ENCODE measurements at regions of chr11 and their contacts with region 1.

Region 1: GRCh38 chr11:12864316-12865156 is 144.6 kb upstream of the RASSF10 start:
- DNase-seq: peak in 1 of 2 experiments; percentile 75
- H3K4me3 ChIP-seq: peak overlapping the region; percentile 9 to 50 (median 13); a peak in 5 of 8 replicates
- H3K27ac ChIP-seq: peak overlapping the region; percentile 95
- H3K4me1 ChIP-seq: peaks cover 6 to 29% (median 26%) of the 10 kb centered on the region in 4 experiments
- H3K27me3 ChIP-seq: no peaks in the 10 kb centered on the region
- CTCF ChIP-seq: no peak
- EP300 ChIP-seq: peak in 1 of 2 experiments; percentile 95; a peak in 1 of 3 replicates
- POLR2A ChIP-seq: peak; percentile 6 to 9; a peak in 2 of 3 replicates
- RAD21 ChIP-seq: no peak

Region 2: DNA sequence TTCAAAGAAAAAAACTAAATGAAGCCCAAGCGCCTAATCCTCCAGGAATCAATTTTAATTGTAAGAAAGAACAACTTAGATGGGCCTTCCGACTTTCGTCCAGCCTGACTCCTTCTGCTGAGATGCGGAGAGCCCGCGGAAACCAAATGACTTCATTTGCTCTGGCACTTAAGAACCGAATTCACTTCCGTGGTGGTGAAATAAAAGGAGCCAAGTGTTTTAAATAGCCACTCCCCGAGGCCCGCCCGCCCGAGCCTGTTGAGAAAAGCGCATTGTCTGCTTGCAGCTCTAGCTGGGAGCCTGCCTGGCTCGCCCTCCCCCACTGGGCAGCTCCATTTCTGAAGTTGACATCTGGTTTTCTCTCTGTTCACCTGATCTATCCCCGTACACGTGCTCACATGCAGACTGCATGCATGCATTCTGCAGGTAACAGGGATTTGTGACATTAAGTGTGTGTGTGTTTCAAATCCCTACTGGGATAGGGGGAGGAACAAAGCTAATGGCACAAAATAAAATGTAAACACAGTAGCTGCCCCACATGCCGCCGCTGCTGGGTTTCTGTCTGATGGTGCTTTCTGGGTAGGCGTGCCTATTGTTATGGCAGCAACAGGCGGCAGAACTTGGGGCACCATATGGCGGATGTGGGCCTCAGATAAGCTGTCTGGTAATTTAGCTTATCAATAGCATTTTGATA is 184.1 kb before region 1 on chr11:
- CTCF ChIA-PET with region 1: interaction called, 4 read pairs
- POLR2A ChIA-PET with region 1: interaction called, 13 read pairs
- DNase-seq: peak; percentile 86 to 88
- H3K4me3 ChIP-seq: peak overlapping the region in 3 of 4 experiments; percentile 1 to 52 (median 27); a peak in 5 of 8 replicates
- H3K27ac ChIP-seq: peak overlapping the region; percentile 41
- H3K4me1 ChIP-seq: peaks cover 13 to 58% (median 40%) of the 10 kb centered on the region in 4 experiments
- H3K27me3 ChIP-seq: peaks cover 0 to 14% (median 4%) of the 10 kb centered on the region in 4 experiments; a peak in 5 of 7 replicates
- CTCF ChIP-seq: no peak
- EP300 ChIP-seq: peak in 1 of 2 experiments; percentile 44; a peak in 1 of 3 replicates
- POLR2A ChIP-seq: peak in 1 of 2 experiments; percentile 7
- RAD21 ChIP-seq: no peak

Region 3: GRCh38 chr11:12800032-12800671 is 64.4 kb before region 1 on chr11:
- CTCF ChIA-PET with region 1: interaction called, 3 read pairs
- POLR2A ChIA-PET with region 1: interaction called, 10 read pairs
- DNase-seq: no peak
- H3K4me3 ChIP-seq: 0 out of 8 replicates have a peak overlapping the region, but pooled peaks of 1 of the 4 experiments have one; percentile 7
- H3K27ac ChIP-seq: no peak overlapping the region
- H3K4me1 ChIP-seq: peaks cover 12 to 39% (median 26%) of the 10 kb centered on the region in 4 experiments
- H3K27me3 ChIP-seq: no peaks in the 10 kb centered on the region
- CTCF ChIP-seq: no peak
- EP300 ChIP-seq: no peak
- POLR2A ChIP-seq: no peak
- RAD21 ChIP-seq: no peak

Region 4: DNA sequence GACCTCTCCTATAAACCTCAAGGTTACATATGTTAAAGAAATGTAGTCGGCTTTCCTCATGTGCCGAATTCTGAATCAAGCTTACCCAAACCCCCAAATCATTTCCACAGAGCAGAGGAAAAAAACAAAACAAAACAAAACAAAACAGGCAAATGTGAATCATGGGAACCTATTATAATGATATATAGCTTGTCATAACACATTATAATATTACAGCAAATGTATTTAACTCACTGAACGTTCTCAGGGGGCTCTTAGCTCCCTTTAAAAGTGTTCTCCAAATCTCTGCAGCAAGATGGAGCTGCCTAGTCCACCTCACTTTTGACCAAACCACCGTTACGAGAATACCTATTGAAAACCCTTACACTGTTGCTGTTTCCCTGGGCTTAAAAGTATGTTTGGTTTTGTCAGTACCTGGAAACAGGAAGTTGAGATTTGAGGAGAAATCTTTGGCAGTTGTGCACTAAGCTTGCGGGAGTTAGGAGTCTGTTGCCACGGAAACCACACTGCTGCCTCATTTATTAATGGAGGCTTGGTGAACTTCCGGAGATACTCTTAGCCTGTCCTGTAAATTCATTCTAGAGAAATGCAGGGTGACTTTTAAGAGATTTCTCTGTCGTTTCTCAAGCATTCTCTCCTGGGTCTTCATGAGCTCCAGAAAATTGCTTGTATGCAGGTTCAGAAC is 22.4 kb before region 1 on chr11:
- CTCF ChIA-PET with region 1: interaction called, 6 read pairs
- POLR2A ChIA-PET with region 1: interaction called, 20 read pairs
- DNase-seq: no peak
- H3K4me3 ChIP-seq: no peak overlapping the region
- H3K27ac ChIP-seq: no peak overlapping the region
- H3K4me1 ChIP-seq: peaks cover 8 to 40% (median 18%) of the 10 kb centered on the region in 4 experiments; a peak in 6 of 7 replicates
- H3K27me3 ChIP-seq: no peaks in the 10 kb centered on the region
- CTCF ChIP-seq: no peak
- EP300 ChIP-seq: no peak
- POLR2A ChIP-seq: no peak
- RAD21 ChIP-seq: no peak

Region 5: DNA sequence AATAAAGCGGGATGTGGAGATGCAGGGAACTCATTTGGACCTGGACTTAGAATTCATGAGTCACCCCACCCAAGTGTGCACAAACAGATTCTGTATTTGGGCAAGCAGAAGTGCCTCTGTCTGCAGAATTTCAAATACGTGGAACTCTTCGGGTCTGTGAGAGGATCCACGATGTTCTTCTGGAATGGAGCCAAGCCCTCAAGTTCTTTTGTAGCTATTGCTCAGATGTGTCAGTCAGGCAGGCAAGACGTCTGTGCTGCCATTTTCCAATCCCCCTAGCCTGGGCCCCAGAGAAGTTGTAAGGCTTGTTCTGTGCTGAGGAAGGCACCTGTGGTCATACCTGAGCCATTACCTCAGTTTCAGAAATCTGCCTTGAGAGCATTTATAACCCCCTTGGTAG is 11.8 kb after region 1 on chr11:
- CTCF ChIA-PET with region 1: interaction called, 27 read pairs
- POLR2A ChIA-PET with region 1: interaction called, 10 read pairs
- DNase-seq: no peak
- H3K4me3 ChIP-seq: no peak overlapping the region
- H3K27ac ChIP-seq: no peak overlapping the region
- H3K4me1 ChIP-seq: peaks cover 0 to 15% (median 4%) of the 10 kb centered on the region in 4 experiments; a peak in 6 of 7 replicates
- H3K27me3 ChIP-seq: no peaks in the 10 kb centered on the region
- CTCF ChIP-seq: no peak
- EP300 ChIP-seq: no peak
- POLR2A ChIP-seq: no peak
- RAD21 ChIP-seq: no peak

Region 6: DNA sequence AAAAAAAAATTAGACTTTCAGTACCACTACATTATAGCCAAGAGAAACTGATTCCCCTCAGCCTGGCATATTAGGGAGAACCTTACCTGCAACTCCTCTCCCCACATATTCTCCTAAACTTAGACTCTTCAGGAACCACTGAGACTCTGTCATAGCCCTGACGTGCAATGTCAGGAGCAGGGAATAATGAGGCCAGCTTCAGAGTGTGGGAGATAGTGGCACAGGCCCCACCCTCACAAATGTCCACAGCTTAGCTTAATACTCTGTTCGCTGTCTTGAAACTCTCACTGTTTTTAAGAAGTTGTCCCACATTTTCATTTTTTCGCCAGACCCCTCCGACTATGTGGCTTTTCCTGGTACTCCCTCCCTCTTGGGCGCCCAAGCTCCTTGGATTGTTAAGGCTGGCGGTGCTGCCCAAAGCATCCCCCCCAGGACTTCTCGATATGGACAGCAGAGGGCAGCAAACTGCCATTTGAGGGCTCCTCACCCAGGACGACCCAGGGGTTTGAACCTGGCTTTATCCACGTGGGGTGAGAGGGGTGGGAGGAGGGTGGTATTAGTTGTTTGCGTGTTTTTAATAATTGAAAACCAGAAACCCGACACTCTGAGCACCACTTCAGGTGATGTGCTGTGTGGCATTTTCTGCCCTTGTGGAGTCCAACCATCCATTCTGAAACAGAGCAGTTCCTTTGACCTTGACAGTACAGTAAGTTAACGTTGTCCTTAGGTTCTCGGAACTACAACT is 99.4 kb after region 1 on chr11:
- CTCF ChIA-PET with region 1: no interaction called
- POLR2A ChIA-PET with region 1: no interaction called
- DNase-seq: peak; percentile 49 to 92
- H3K4me3 ChIP-seq: no peak overlapping the region
- H3K27ac ChIP-seq: no peak overlapping the region
- H3K4me1 ChIP-seq: peaks cover 0 to 2% (median 0%) of the 10 kb centered on the region in 4 experiments; a peak in 1 of 7 replicates
- H3K27me3 ChIP-seq: no peaks in the 10 kb centered on the region
- CTCF ChIP-seq: peak; percentile 66 to 90 (median 79)
- EP300 ChIP-seq: no peak
- POLR2A ChIP-seq: no peak
- RAD21 ChIP-seq: peak; percentile 96 to 98

Measured in H1 (cell line).